ENCODE measurements at regions of chr2 and their contacts with region 1.

Region 1: DNA sequence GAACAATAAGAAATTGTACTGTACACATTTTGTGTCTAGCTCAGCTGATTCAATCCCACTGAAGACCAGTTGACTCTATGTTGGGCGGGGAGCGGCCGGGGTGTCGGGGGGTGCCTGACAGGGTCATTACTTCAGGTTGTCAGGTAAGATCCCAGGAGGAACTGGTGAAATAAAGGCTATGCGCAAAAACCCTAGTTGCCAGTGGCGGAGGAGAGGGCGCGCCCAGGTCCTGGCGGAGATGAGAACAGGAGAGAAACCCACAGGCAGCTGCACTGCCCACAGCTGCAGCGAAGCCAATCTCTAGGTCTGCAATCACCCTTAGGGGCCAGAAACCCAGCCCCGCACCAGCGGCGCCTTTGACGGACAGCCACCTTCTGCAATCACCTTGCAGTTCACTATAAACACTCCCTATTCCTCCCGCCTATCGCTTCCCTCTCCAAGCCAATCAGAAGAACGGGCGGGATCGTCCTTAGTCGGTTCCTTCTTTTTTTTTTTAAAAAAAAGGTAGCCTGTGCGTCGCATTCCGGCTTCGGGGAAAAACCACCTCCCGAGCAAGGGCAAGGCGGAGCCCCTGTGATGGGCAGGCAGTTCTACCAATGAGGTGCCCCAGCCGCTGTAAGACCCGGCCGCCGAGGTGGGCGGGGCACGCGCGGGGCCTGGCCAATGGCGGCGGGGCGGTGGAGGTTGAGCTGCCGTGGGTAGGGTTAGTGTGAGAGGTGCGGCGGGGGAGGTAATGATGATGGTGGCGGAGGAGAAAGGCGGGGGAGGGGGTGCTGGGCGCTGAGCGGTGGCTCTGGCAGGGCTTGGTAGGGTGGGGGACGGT is at the start of gene EHBP1:
- DNase-seq: peak; percentile 98 to 100
- ATAC-seq: peak; percentile 91 to 96
- H3K4me3 ChIP-seq: peak within 1 kb of the TSS; percentile 68
- H3K27ac ChIP-seq: peak within 1 kb of the TSS; percentile 94 to 97
- H3K4me1 ChIP-seq: peaks cover 22% of the 10 kb centered on the region
- CTCF ChIP-seq: no peak
- EP300 ChIP-seq: no peak
- POLR2A ChIP-seq: peak; percentile 91
- RAD21 ChIP-seq: peak in 1 of 2 experiments; percentile 29; a peak in 1 of 5 replicates
- polyA plus RNA-seq, gene EHBP1: 145 and 204 TPM in 2 replicates

Region 2: GRCh38 chr2:62570861-62571698 is 134.1 kb before region 1 on chr2:
- CTCF ChIA-PET with region 1: interaction called, 3 read pairs
- POLR2A ChIA-PET with region 1: interaction called, 23 read pairs
- DNase-seq: peak; percentile 58 to 63
- ATAC-seq: peak; percentile 61 to 64
- H3K4me3 ChIP-seq: peak overlapping the region; percentile 36
- H3K27ac ChIP-seq: peak overlapping the region; percentile 94 to 96
- H3K4me1 ChIP-seq: peaks cover 65% of the 10 kb centered on the region
- CTCF ChIP-seq: no peak
- EP300 ChIP-seq: peak; percentile 43 to 70; a peak in 3 of 5 replicates
- POLR2A ChIP-seq: peak; percentile 14; the same call in 1 of the 2 replicates
- RAD21 ChIP-seq: no peak; a peak in 1 of 5 replicates

Region 3: GRCh38 chr2:62577994-62578781 is 127.0 kb before region 1 on chr2:
- CTCF ChIA-PET with region 1: interaction called, 4 read pairs
- POLR2A ChIA-PET with region 1: interaction called, 37 read pairs
- DNase-seq: peak; percentile 72 to 94
- ATAC-seq: peak; percentile 80 to 87
- H3K4me3 ChIP-seq: 0 out of 3 replicates have a peak overlapping the region, but pooled peaks have one; percentile 13
- H3K27ac ChIP-seq: peak overlapping the region; percentile 94 to 96
- H3K4me1 ChIP-seq: peaks cover 41% of the 10 kb centered on the region
- CTCF ChIP-seq: no peak
- EP300 ChIP-seq: peak; percentile 99; a peak in 4 of 5 replicates
- POLR2A ChIP-seq: no peak
- RAD21 ChIP-seq: peak; percentile 45 to 80